ENCODE measurements at regions of chr12 and their contacts with region 1.

Region 1: GRCh38 chr12:321607-322326 is 59.1 kb upstream of the SLC6A13 start:
- DNase-seq: no peak
- ATAC-seq: no peak
- H3K4me3 ChIP-seq: no peak overlapping the region
- H3K27ac ChIP-seq: no peak overlapping the region
- H3K4me1 ChIP-seq: no peaks in the 10 kb centered on the region
- H3K27me3 ChIP-seq: no peaks in the 10 kb centered on the region
- CTCF ChIP-seq: no peak
- POLR2A ChIP-seq: no peak
- RAD21 ChIP-seq: no peak

Region 2: GRCh38 chr12:366820-367219 is 45.1 kb after region 1 on chr12:
- CTCF ChIA-PET with region 1: no interaction called
- POLR2A ChIA-PET with region 1: no interaction called
- dilution Hi-C with region 1: no loop called
- in situ Hi-C with region 1: no loop called
- intact Hi-C with region 1: loop called (anchors 2 kb)
- DNase-seq: no peak
- ATAC-seq: no peak
- H3K4me3 ChIP-seq: no peak overlapping the region
- H3K27ac ChIP-seq: no peak overlapping the region
- H3K4me1 ChIP-seq: no peaks in the 10 kb centered on the region
- H3K27me3 ChIP-seq: no peaks in the 10 kb centered on the region
- CTCF ChIP-seq: no peak
- POLR2A ChIP-seq: no peak
- RAD21 ChIP-seq: no peak

Measured in IMR-90 (cell line).